Right lobe of liver (tissue), 6 donors: ENCODE measurements at regions of chr11 and their contacts with region 1.

Region 1: DNA sequence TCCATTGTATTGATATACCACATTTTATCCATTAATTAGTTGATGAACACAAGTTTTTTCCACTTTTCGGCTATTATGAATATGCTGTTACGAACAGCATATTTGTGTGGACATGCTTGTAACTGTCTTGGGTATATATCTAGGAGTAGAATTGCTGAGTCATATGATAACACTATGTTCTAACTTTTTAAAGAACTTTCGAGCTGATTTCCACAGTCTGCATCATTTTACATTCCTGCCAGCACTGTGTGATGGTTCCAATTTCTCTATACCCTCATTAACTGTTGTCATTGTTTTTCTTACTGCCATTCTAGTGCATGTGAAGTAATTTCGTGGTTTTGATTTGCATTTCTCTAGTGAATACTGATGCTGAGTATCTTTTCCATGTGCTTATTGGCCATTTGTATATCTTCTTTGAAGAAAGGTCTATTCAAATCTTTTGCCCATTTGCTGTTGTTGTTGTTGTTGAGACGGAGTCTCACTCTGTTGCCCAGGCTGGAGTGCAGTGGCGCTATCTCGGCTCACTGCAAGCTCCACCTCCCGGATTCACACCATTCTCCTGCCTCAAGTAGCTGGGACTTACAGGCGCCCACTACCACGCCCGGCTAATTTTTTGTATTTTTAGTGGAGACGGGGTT is 7.4 kb upstream of the RCE1 start:
- DNase-seq: no peak
- ATAC-seq: no peak
- H3K4me3 ChIP-seq: no peak overlapping the region
- H3K27ac ChIP-seq: no peak overlapping the region
- H3K4me1 ChIP-seq: no peaks in the 10 kb centered on the region
- H3K27me3 ChIP-seq: no peaks in the 10 kb centered on the region
- CTCF ChIP-seq: no peak
- POLR2A ChIP-seq: no peak

Region 2: DNA sequence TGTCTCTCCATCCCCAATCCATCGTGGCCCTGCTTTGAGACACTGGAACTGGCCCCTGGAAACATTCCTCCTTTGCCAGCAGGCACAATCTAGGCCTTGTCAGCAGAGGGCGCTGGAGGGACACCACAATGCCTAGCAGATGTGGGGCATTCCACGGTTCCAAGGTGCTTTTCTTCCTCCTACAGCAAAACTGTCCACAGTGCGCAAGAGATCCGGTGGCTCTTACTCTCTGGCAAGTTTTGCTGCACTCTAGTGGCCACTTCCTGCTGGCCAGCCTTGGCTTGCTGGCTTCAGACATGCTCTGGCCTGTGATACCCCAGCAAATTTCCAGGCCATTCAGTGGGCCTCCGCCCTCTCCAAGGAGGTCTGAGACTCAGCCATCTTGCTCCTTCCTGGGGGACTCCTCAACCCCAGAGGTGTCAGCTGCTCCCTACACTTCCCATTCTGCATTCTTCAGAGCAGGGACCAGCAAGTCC is 141.1 kb before region 1 on chr11:
- intact Hi-C with region 1: loop called (anchors 2 to 5 kb)
- DNase-seq: peak; percentile 87 to 92 (median 91)
- ATAC-seq: peak; percentile 94 to 98 (median 97)
- H3K4me3 ChIP-seq: no peak overlapping the region
- H3K27ac ChIP-seq: no peak overlapping the region
- H3K4me1 ChIP-seq: no peaks in the 10 kb centered on the region
- H3K27me3 ChIP-seq: no peaks in the 10 kb centered on the region
- CTCF ChIP-seq: peak; percentile 95 to 98 (median 97)
- POLR2A ChIP-seq: no peak